ENCODE measurements at regions of chr1 and their contacts with region 1.

Region 1: GRCh38 chr1:87632232-87632631 is 303.6 kb downstream of the LMO4 start:
- DNase-seq: no peak
- H3K4me3 ChIP-seq: no peak overlapping the region
- H3K27ac ChIP-seq: no peak overlapping the region
- H3K4me1 ChIP-seq: no peaks in the 10 kb centered on the region
- H3K27me3 ChIP-seq: no peaks in the 10 kb centered on the region
- CTCF ChIP-seq: no peak
- POLR2A ChIP-seq: no peak

Region 2: GRCh38 chr1:87435484-87435883 is 196.7 kb before region 1 on chr1:
- intact Hi-C with region 1: no loop called
- DNase-seq: no peak
- H3K4me3 ChIP-seq: no peak overlapping the region
- H3K27ac ChIP-seq: no peak overlapping the region
- H3K4me1 ChIP-seq: peaks cover 24% of the 10 kb centered on the region
- H3K27me3 ChIP-seq: no peaks in the 10 kb centered on the region
- CTCF ChIP-seq: no peak
- POLR2A ChIP-seq: no peak

Region 3: DNA sequence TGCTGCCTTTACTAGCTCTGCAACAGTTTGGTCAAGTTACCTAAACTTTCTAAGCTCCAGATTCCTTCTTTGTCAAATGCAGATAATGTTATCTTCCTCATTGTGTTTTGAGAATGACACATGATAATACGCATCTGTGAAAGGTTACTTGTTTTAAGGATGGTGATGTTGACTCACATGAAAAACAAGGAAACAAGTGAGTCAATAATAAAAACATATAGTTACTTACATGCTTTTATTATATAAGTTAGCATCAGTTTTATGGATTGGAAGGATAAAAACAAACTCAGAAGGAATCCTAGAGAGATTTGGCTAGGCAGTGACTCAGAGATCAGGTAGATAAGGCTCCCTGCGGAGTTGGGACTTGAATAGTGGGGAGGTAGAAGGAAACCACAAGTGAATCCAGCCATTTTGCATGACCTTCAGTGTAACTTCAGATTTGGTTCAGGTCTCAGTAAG is 159.0 kb before region 1 on chr1:
- intact Hi-C with region 1: loop called (anchors 5 kb)
- DNase-seq: no peak
- H3K4me3 ChIP-seq: no peak overlapping the region
- H3K27ac ChIP-seq: no peak overlapping the region
- H3K4me1 ChIP-seq: no peaks in the 10 kb centered on the region
- H3K27me3 ChIP-seq: no peaks in the 10 kb centered on the region
- CTCF ChIP-seq: no peak
- POLR2A ChIP-seq: no peak

Region 4: DNA sequence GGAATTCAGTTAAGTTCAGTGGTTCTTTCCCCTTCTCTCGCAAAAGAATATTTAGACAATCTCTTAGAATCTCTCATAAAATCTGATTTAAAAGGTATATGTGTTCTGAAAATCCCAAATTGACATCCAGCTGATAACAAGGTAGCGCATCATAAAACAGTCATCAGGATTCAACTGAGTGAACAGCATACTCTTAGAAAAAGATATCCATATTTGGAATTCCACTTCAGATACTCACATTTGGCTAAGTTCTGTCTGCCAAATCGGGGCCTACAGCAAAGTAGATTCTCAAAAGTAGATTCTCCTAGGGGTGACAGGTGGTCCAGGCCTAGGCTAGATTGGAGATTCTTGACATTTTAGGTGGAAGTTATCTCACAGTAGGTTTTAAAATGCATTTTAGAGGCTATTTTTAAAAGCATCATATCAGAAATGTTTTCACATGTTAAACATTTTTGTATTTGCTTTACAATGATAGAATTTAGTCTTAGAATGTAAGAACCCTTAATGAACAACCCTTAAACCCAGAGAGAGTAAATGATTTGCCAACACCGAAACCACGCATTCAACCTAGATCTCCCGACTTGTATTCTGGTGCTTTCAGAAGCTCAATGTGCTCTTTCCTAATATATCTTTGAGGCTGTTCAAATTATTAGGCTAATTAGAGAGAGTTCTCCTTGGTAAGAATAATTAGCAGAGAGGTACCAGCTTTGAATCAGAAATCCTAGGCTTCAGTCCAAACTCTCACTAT is 15.4 kb after region 1 on chr1:
- intact Hi-C with region 1: no loop called
- DNase-seq: no peak
- H3K4me3 ChIP-seq: no peak overlapping the region
- H3K27ac ChIP-seq: no peak overlapping the region
- H3K4me1 ChIP-seq: peaks cover 24% of the 10 kb centered on the region
- H3K27me3 ChIP-seq: no peaks in the 10 kb centered on the region
- CTCF ChIP-seq: no peak
- POLR2A ChIP-seq: no peak